ENCODE measurements at regions of chr9 and their contacts with region 1.

Region 1: DNA sequence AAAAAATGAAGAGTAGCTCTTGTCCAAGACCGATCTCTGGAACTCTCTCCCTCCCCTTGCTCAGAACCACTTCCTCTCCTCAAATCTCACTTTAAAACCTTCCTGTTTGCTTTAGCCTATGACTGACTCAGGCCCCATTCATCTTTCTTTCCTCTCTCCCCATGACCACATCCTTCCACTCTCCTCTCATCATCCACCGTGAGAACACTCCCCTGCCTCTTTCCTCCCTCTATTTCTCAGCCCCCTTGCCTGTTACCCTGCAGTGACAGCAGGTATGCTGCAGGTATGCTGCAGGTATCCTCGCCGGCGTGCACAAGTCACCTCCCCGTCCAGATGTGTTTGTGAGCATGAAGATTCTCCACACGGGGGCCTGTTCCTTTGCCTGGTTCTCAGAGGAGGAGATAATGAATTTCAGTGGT is 505.3 kb downstream of the CCDC171 start:
- DNase-seq: no peak
- H3K4me3 ChIP-seq: no peak overlapping the region
- H3K27ac ChIP-seq: no peak overlapping the region
- H3K4me1 ChIP-seq: no peaks in the 10 kb centered on the region
- H3K27me3 ChIP-seq: no peaks in the 10 kb centered on the region
- CTCF ChIP-seq: no peak
- EP300 ChIP-seq: no peak
- POLR2A ChIP-seq: no peak

Region 2: DNA sequence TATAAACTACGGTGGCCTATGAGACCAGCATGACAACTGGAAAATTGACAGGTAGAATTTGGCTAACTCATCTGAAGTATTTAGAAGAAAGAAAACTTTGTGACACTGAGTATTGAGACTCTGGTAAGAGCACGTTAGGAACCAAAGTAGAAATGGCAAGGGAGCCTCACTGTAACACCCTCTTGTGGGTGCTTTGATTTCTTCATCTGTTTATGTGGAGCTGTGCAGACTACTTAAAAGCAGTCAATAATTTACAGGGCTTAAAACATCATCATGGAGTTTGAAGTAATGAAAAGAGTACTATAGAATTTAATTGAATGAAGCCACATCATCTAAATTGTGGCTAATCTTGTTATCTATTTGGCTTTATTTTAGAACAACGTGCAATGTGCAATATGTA is 91.1 kb before region 1 on chr9:
- in situ Hi-C with region 1: loop called in 1 of 4 experiments (anchors 25 kb)
- intact Hi-C with region 1: no loop called
- DNase-seq: no peak
- H3K4me3 ChIP-seq: no peak overlapping the region
- H3K27ac ChIP-seq: no peak overlapping the region
- H3K4me1 ChIP-seq: no peaks in the 10 kb centered on the region
- H3K27me3 ChIP-seq: no peaks in the 10 kb centered on the region
- CTCF ChIP-seq: no peak
- EP300 ChIP-seq: no peak
- POLR2A ChIP-seq: no peak